ENCODE measurements at regions of chr3 and their contacts with region 1.

Region 1: GRCh38 chr3:62201438-62202035 is 171.8 kb downstream of the FEZF2 start:
- DNase-seq: peak in 1 of 2 experiments; percentile 23
- H3K4me3 ChIP-seq: no peak overlapping the region
- H3K4me3 Mint-ChIP-seq: no peak overlapping the region
- H3K27ac Mint-ChIP-seq: no peak overlapping the region
- H3K4me1 ChIP-seq: no peaks in the 10 kb centered on the region
- H3K4me1 Mint-ChIP-seq: no peaks in the 10 kb centered on the region
- H3K27me3 ChIP-seq: no peaks in the 10 kb centered on the region
- H3K27me3 Mint-ChIP-seq: no peaks in the 10 kb centered on the region
- CTCF ChIP-seq: peak; percentile 41 to 53

Region 2: GRCh38 chr3:62312201-62312600 is 110.7 kb after region 1 on chr3:
- CTCF ChIA-PET with region 1: interaction called, 3 read pairs
- POLR2A ChIA-PET with region 1: no interaction called
- intact Hi-C with region 1: loop called (anchors 2 kb)
- DNase-seq: no peak
- H3K4me3 ChIP-seq: no peak overlapping the region
- H3K4me3 Mint-ChIP-seq: no peak overlapping the region
- H3K27ac Mint-ChIP-seq: no peak overlapping the region
- H3K4me1 ChIP-seq: no peaks in the 10 kb centered on the region
- H3K4me1 Mint-ChIP-seq: no peaks in the 10 kb centered on the region
- H3K27me3 ChIP-seq: no peaks in the 10 kb centered on the region
- H3K27me3 Mint-ChIP-seq: peaks cover 10% of the 10 kb centered on the region
- CTCF ChIP-seq: no peak